CD4-positive, alpha-beta memory T cell (primary cell): ENCODE measurements at regions of chr14 and their contacts with region 1.

Region 1: DNA sequence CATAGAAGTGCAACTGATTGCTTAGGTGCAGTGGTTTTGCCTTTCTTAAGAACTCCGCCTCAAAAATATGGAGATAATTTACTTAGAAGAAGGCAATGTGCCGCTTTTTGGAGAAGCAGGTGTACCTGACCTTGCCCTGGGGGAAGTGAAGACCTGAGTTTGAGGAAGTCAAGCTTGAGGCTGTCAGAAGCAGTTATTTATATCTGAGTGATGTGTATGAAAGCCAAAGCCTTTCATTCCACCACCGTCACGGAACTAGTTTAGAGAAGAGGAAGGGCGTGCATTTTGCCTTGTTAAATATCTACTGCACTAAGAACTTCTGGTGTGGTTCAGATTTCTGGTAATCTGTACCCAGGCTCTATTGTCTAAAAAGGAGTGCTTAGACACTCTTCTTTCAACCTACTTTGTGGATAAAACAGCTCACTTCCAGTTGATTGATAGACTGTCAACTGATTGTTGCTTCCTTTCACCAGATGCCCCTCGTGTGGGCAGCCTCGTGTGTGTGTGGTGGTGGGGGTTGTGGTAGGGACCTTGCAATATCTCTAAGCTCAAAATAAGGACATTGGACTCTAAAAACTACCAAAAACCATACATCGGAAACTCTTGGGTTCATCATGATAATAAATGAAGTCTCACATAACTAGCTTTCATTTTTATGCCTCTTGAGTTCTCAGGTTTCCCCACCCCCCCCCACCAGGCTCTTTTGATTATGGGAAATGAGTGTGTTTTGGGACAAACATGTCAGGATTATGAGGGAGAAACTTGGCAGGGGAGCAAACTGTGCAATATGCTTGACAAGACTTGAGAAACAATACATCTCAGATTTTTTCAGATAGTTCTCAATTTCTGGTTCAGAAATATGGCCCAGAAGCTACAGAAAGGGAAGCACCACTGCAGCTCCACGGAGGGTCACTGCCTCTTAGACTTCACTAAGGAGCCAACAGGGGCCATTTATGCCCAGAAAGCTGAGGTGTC is 78.6 kb downstream of the ARF6 start:
- DNase-seq: peak; percentile 75 to 85 (median 82)
- H3K4me3 ChIP-seq: peak overlapping the region; percentile 36 to 44
- H3K4me3 Mint-ChIP-seq: peak overlapping the region; percentile 77 to 89 (median 82)
- H3K27ac ChIP-seq: peak overlapping the region; percentile 73
- H3K27ac Mint-ChIP-seq: peak overlapping the region; percentile 87 to 98 (median 96)
- H3K4me1 ChIP-seq: peaks cover 69% of the 10 kb centered on the region
- H3K4me1 Mint-ChIP-seq: peaks cover 44 to 76% (median 62%) of the 10 kb centered on the region in 4 donors
- H3K27me3 ChIP-seq: no peaks in the 10 kb centered on the region
- H3K27me3 Mint-ChIP-seq: no peaks in the 10 kb centered on the region

Region 2: GRCh38 chr14:49092345-49092744 is 879.1 kb before region 1 on chr14:
- CTCF ChIA-PET with region 1: no interaction called
- POLR2A ChIA-PET with region 1: no interaction called
- intact Hi-C with region 1: no loop called
- DNase-seq: no peak
- H3K4me3 ChIP-seq: no peak overlapping the region
- H3K4me3 Mint-ChIP-seq: no peak overlapping the region
- H3K27ac ChIP-seq: no peak overlapping the region
- H3K27ac Mint-ChIP-seq: no peak overlapping the region
- H3K4me1 ChIP-seq: no peaks in the 10 kb centered on the region
- H3K4me1 Mint-ChIP-seq: no peaks in the 10 kb centered on the region
- H3K27me3 ChIP-seq: no peaks in the 10 kb centered on the region
- H3K27me3 Mint-ChIP-seq: no peaks in the 10 kb centered on the region

Region 3: GRCh38 chr14:49892636-49893308 is 78.7 kb before region 1 on chr14 and contains the start of gene ARF6:
- CTCF ChIA-PET with region 1: interaction called, 8 read pairs
- POLR2A ChIA-PET with region 1: interaction called, 84 read pairs
- intact Hi-C with region 1: loop called (anchors 1 kb)
- DNase-seq: peak; percentile 92 to 94 (median 92)
- H3K4me3 ChIP-seq: peak within 1 kb of the TSS; percentile 75 to 100
- H3K4me3 Mint-ChIP-seq: peak within 1 kb of the TSS; percentile 95 to 99 (median 98)
- H3K27ac ChIP-seq: peak within 1 kb of the TSS; percentile 98
- H3K27ac Mint-ChIP-seq: peak within 1 kb of the TSS; percentile 93 to 100 (median 99)
- H3K4me1 ChIP-seq: peaks cover 35% of the 10 kb centered on the region
- H3K4me1 Mint-ChIP-seq: peaks cover 13 to 45% (median 22%) of the 10 kb centered on the region in 4 donors
- H3K27me3 ChIP-seq: no peaks in the 10 kb centered on the region
- H3K27me3 Mint-ChIP-seq: no peaks in the 10 kb centered on the region
- total RNA-seq, gene ARF6: 116 to 124 TPM

Region 4: GRCh38 chr14:49940808-49941421 is 30.5 kb before region 1 on chr14:
- CTCF ChIA-PET with region 1: interaction called, 44 read pairs
- POLR2A ChIA-PET with region 1: interaction called, 195 read pairs
- intact Hi-C with region 1: loop called (anchors 1 kb)
- DNase-seq: peak in 4 of 5 donors; percentile 40 to 56 (median 48)
- H3K4me3 ChIP-seq: peak overlapping the region in 1 of 2 donors; percentile 15
- H3K4me3 Mint-ChIP-seq: peak overlapping the region; percentile 60 to 86 (median 68)
- H3K27ac ChIP-seq: peak overlapping the region; percentile 23
- H3K27ac Mint-ChIP-seq: peak overlapping the region; percentile 31 to 93 (median 88)
- H3K4me1 ChIP-seq: peaks cover 52% of the 10 kb centered on the region
- H3K4me1 Mint-ChIP-seq: peaks cover 44 to 72% (median 61%) of the 10 kb centered on the region in 4 donors
- H3K27me3 ChIP-seq: no peaks in the 10 kb centered on the region
- H3K27me3 Mint-ChIP-seq: no peaks in the 10 kb centered on the region

Region 5: DNA sequence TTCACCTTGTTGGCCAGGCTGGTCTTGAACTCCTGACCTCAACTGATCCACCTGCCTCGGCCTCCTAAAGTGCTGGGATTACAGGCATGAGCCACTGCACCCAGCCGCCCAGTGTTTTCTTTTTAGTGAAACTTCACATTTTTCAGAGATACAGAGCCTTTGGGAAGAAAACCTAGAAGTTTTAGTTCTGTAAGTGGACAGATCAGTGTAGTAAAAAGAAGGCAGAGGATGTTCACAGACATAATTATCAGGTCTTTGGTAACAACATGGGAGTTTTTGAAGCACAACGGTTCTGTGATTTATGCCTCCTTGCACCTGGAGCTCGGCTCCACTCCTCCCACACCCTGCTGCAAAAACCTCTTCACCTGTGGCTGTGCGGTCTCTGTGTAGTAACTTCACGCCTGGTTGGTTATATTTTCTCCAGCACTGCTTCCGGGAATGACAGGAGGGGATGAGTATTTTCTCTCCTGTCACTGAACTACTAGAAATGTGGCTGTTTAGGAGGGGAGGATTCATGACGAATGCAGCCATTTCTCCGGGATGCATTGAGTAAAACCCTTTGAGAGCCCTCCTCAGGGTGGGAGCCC is 11.5 kb before region 1 on chr14:
- CTCF ChIA-PET with region 1: interaction called, 3 read pairs
- POLR2A ChIA-PET with region 1: interaction called, 195 read pairs
- intact Hi-C with region 1: no loop called
- DNase-seq: peak in 2 of 5 donors; percentile 28 to 45
- H3K4me3 ChIP-seq: no peak overlapping the region
- H3K4me3 Mint-ChIP-seq: peak overlapping the region in 6 of 8 donors; percentile 21 to 64 (median 49)
- H3K27ac ChIP-seq: no peak overlapping the region
- H3K27ac Mint-ChIP-seq: peak overlapping the region in 4 of 7 donors; percentile 14 to 70 (median 53)
- H3K4me1 ChIP-seq: peaks cover 15% of the 10 kb centered on the region
- H3K4me1 Mint-ChIP-seq: peaks cover 7 to 15% (median 8%) of the 10 kb centered on the region in 4 donors
- H3K27me3 ChIP-seq: no peaks in the 10 kb centered on the region
- H3K27me3 Mint-ChIP-seq: no peaks in the 10 kb centered on the region

Region 6: DNA sequence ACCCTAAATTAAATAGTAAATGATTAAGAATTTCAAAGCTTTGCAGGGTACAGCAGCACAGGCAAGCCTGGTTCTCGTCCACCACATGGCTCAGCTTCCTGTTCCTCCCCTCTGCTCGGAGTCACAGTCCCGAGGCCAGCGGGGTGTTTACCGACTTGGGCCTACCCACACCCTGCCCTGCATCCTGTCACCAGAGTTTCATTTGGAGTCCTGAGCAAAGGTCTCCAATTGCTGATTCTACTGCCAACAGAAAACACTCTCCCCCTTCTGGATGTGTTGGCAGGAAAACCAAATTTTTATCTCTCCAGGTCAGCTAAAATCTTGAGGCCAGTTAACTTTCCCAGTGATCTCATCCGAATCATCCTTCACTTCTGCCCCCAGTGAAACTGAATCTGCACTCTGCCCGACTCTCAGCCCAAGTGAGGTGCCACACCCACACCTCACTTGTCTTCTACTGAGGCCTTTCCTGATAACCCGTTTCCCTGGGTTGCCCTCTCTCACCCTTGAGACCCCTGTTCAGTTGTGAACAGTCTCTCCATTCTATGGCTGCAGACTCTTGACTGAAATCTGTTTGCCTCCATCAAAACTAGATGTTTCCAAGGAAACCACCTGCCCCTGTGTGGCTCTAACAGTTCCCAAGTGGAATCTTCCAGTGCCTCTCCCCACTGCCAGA is 73.7 kb after region 1 on chr14:
- CTCF ChIA-PET with region 1: interaction called, 4 read pairs
- POLR2A ChIA-PET with region 1: interaction called, 39 read pairs
- intact Hi-C with region 1: loop called (anchors 2 kb)
- DNase-seq: peak; percentile 59 to 79 (median 71)
- H3K4me3 ChIP-seq: peak overlapping the region in 1 of 2 donors; percentile 12
- H3K4me3 Mint-ChIP-seq: peak overlapping the region; percentile 28 to 89 (median 66)
- H3K27ac ChIP-seq: peak overlapping the region; percentile 64
- H3K27ac Mint-ChIP-seq: peak overlapping the region; percentile 89 to 97 (median 94)
- H3K4me1 ChIP-seq: peaks cover 75% of the 10 kb centered on the region
- H3K4me1 Mint-ChIP-seq: peaks cover 56 to 85% (median 71%) of the 10 kb centered on the region in 4 donors
- H3K27me3 ChIP-seq: no peaks in the 10 kb centered on the region
- H3K27me3 Mint-ChIP-seq: no peaks in the 10 kb centered on the region

Region 7: GRCh38 chr14:50070840-50071548 is 99.6 kb after region 1 on chr14:
- CTCF ChIA-PET with region 1: no interaction called
- POLR2A ChIA-PET with region 1: no interaction called
- intact Hi-C with region 1: no loop called
- DNase-seq: no peak
- H3K4me3 ChIP-seq: no peak overlapping the region
- H3K4me3 Mint-ChIP-seq: no peak overlapping the region
- H3K27ac ChIP-seq: no peak overlapping the region
- H3K27ac Mint-ChIP-seq: peak overlapping the region in 2 of 7 donors; percentile 17 to 56
- H3K4me1 ChIP-seq: peaks cover 7% of the 10 kb centered on the region
- H3K4me1 Mint-ChIP-seq: peaks cover 10 to 39% (median 16%) of the 10 kb centered on the region in 4 donors
- H3K27me3 ChIP-seq: no peaks in the 10 kb centered on the region
- H3K27me3 Mint-ChIP-seq: no peaks in the 10 kb centered on the region

Region 8: GRCh38 chr14:50148799-50149198 is 177.4 kb after region 1 on chr14:
- CTCF ChIA-PET with region 1: no interaction called
- POLR2A ChIA-PET with region 1: no interaction called
- intact Hi-C with region 1: no loop called
- DNase-seq: no peak
- H3K4me3 ChIP-seq: no peak overlapping the region
- H3K4me3 Mint-ChIP-seq: no peak overlapping the region
- H3K27ac ChIP-seq: no peak overlapping the region
- H3K27ac Mint-ChIP-seq: no peak overlapping the region
- H3K4me1 ChIP-seq: no peaks in the 10 kb centered on the region
- H3K4me1 Mint-ChIP-seq: no peaks in the 10 kb centered on the region
- H3K27me3 ChIP-seq: no peaks in the 10 kb centered on the region
- H3K27me3 Mint-ChIP-seq: no peaks in the 10 kb centered on the region